Cardiac septum (tissue), 1 donor: ENCODE measurements at regions of chr11 and their contacts with region 1.

Region 1: DNA sequence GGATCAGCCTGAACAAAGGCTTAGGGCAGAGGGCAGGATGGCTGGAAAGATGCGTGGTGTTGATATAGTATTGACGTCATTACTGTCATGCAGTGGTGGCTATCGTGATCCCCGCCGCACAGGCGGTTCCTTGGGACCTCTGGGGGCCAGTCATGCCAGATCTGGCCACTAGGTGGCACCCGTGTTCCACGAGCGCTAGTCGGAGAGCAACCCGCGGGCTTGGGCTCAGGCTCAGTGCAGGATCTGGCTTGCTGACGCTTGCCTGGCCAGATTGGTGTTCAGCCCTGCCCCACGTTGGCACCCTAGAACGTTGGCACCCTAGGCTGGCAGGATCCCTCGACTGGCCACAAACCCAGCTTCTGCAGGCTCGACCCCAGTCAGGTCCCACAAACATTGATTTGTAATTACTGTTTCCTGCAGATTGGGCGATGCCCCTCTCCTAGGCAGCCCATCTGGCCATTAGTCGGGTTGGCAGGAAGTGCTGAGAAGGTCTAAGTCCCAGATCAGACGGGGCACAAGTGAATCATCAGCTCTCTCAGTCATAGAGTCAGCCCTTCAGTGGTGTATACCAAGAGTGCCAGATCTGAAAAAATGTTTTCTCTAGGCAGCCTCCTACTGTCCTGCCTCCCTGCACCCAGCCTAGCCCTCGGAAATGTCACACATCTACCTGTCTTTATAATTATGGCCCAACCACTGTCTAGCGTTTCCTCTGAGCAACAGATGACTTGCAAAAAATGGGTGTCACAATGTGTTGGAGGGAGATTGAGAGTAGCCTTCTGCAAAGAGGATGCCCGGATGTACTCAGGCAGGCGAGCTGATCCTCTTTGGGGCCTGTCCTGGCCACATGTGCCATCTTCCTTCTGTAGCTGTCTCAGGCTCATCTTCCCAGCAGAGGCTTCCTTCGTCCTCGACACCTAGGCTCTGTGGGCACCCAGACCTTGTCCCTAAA is 315.3 kb downstream of the TMEM135 start:
- DNase-seq: peak; percentile 93

Region 2: DNA sequence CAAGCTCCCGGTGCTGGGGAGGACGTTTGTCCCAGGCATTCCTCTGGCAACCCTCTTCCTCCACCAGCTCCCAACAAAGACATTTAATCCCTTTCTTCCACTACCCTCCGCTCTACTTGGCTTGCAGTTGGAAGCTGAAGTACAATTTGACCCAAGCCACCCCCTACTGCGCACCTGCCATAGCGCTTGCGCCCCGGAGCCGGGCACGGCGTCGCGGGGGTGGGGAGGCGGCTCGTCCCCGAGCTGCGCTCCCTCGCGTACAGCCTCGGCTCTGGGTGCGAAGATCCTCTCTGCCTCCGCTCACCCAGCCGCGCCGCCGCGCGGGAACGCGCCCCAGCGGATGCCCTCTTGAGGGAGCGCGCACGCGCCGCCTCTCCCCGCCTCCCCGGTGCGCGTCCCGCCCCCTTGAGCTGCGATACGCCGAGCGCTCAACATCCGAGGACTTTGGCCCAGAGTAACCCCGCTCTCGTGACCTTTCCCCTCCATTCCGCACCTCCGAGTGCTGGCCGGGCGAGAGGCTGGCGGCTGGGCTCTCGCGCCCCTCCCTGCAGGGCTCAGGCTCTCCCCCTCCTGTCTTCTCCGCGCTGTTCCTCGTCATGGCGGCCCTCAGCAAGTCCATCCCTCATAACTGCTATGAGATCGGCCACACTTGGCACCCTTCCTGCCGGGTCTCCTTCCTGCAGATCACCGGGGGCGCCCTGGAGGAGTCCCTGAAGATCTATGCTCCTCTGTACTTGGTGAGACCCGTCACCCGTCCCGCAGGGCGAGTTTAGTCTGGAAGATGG is 315.4 kb before region 1 on chr11 and contains the start of gene TMEM135:
- intact Hi-C with region 1: no loop called
- DNase-seq: peak; percentile 95
- total RNA-seq, gene TMEM135: 6.4 TPM

Region 3: GRCh38 chr11:87421422-87421821 is 68.4 kb after region 1 on chr11:
- intact Hi-C with region 1: loop called (anchors 1 kb)
- DNase-seq: no peak

Region 4: DNA sequence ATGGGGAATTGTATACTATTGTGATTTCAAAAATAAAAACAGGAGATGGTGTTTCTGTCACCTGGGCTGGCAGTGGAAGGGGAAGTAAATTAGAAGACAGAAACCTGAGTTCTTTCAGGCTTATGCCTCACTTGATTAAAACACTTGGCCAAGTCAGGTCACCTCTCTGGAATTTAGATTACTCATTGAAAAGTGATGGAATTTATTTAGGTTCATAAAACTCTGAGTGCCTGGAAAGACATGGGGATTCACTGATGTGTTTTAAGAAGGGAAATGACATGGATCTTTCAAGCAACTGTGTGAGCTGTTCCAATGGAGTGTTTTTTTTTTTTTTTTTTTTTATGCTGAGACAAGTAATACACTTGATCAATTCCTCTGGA is 84.8 kb after region 1 on chr11:
- intact Hi-C with region 1: no loop called
- DNase-seq: no peak